Activated CD4-positive, alpha-beta memory T cell treated with anti-CD3 and anti-CD28 coated beads for 36 hours (primary cell): ENCODE measurements at regions of chr12 and their contacts with region 1.

Region 1: GRCh38 chr12:93785262-93786010 is 108.3 kb downstream of the CRADD start:
- DNase-seq: peak; percentile 73
- H3K4me3 Mint-ChIP-seq: peak overlapping the region; percentile 16
- H3K27ac Mint-ChIP-seq: peak overlapping the region; percentile 81
- H3K4me1 Mint-ChIP-seq: peaks cover 57% of the 10 kb centered on the region
- H3K27me3 Mint-ChIP-seq: no peaks in the 10 kb centered on the region

Region 2: GRCh38 chr12:92928962-92929915 is 856.2 kb before region 1 on chr12 and contains the start of gene EEA1:
- CTCF ChIA-PET with region 1: no interaction called
- POLR2A ChIA-PET with region 1: no interaction called
- intact Hi-C with region 1: loop called (anchors 10 kb)
- DNase-seq: peak; percentile 98
- H3K4me3 Mint-ChIP-seq: peak within 1 kb of the TSS; percentile 85
- H3K27ac Mint-ChIP-seq: peak within 1 kb of the TSS; percentile 95
- H3K4me1 Mint-ChIP-seq: peaks cover 32% of the 10 kb centered on the region
- H3K27me3 Mint-ChIP-seq: no peaks in the 10 kb centered on the region
- total RNA-seq, gene EEA1: 17.5 to 17.7 TPM

Region 3: DNA sequence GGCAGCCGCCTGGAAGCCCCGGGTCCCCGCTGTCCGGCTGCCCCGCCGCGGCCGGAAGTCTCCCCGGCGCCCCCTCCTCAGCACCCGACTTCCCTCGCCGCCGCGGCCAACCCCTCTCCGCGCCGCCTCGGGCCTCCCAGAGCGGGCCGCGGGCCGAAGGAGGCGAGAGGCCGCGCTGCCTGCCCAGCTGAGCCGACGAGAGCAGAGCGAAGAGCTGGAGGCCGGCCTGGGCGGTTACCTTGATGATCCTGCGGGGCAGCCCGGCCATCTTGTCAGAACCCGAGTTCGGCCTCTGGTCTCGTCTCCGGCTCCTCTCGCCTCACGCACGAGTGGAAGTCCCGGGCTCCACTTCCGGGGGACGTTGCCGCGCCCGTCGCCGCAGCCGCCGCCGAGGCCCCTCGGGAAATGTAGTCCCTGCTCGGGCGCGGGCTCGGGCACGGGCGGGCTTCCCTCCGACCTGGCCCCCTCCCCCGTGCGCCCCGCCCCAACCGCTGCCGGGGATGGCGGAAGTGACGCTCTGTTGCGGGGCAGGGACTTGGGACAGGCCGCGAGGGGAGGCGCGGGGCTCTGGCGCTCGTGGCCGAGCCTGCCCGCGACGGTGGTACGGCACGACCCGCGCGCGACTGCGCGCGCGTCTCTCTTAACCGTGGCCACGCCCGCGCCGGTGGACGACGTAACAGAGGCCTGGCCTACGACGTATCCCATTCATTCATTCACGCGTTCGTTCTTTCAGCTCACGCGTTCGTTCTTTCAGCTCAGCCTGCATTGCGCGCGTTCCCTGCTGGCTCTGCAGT is 343.6 kb before region 1 on chr12 and contains the start of gene UBE2N:
- CTCF ChIA-PET with region 1: no interaction called
- POLR2A ChIA-PET with region 1: no interaction called
- intact Hi-C with region 1: loop called (anchors 10 kb)
- DNase-seq: peak; percentile 97
- H3K4me3 Mint-ChIP-seq: peak within 1 kb of the TSS; percentile 94
- H3K27ac Mint-ChIP-seq: peak within 1 kb of the TSS; percentile 95
- H3K4me1 Mint-ChIP-seq: peaks cover 46% of the 10 kb centered on the region
- H3K27me3 Mint-ChIP-seq: no peaks in the 10 kb centered on the region
- total RNA-seq, gene UBE2N: 177 TPM

Region 4: DNA sequence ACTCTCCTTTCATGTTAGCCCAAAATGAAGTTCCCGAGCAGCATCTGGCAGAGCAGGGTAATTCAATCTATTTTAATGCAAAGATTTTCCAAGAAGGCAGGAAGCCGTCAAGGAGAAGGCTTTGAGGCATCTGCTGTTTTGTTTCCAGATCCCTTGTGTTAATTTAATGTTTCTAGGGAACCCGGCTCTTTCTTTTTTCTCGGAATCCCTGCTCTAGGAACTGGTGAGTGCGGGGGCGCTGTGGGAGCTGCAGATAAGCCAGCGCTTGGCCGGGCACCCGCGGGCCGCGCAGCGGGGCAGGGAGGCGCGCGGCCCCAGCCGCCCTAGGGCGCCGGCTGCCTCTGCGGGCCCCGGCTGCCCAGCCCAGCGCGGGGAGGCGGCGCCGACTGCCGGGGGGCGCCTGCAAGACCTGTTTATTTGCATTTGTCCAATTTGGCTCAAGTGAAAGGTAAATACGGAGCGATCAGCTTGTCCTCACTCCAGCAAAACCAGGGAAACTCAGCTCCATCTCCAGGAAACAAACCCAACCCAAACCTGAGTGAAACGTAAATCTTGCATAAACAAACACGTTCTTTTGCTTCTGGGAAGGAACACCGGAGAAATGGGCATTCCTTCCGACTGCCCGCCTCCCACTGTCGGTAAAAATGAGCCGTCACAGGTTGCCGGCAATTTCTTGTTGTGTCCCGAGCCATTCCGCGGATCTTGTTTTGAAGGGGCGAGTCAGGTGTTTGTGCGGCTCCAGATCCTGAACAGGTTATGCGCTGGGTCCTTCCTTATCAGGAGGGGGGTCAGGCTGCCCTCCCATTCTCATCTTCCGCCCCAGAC is 43.1 kb before region 1 on chr12:
- CTCF ChIA-PET with region 1: no interaction called
- POLR2A ChIA-PET with region 1: no interaction called
- intact Hi-C with region 1: loop called (anchors 5 kb)
- DNase-seq: peak; percentile 77
- H3K4me3 Mint-ChIP-seq: peak overlapping the region; percentile 74
- H3K27ac Mint-ChIP-seq: peak overlapping the region; percentile 81
- H3K4me1 Mint-ChIP-seq: peaks cover 35% of the 10 kb centered on the region
- H3K27me3 Mint-ChIP-seq: no peaks in the 10 kb centered on the region

Region 5: GRCh38 chr12:93802698-93803423 is 17.4 kb after region 1 on chr12:
- CTCF ChIA-PET with region 1: interaction called, 3 read pairs
- POLR2A ChIA-PET with region 1: interaction called, 3 read pairs
- intact Hi-C with region 1: loop called (anchors 1 kb)
- DNase-seq: no peak
- H3K4me3 Mint-ChIP-seq: no peak overlapping the region
- H3K27ac Mint-ChIP-seq: no peak overlapping the region
- H3K4me1 Mint-ChIP-seq: peaks cover 45% of the 10 kb centered on the region
- H3K27me3 Mint-ChIP-seq: no peaks in the 10 kb centered on the region

Region 6: GRCh38 chr12:94372461-94372860 is 587.0 kb after region 1 on chr12:
- CTCF ChIA-PET with region 1: no interaction called
- POLR2A ChIA-PET with region 1: no interaction called
- intact Hi-C with region 1: loop called (anchors 10 kb)
- DNase-seq: no peak
- H3K4me3 Mint-ChIP-seq: no peak overlapping the region
- H3K27ac Mint-ChIP-seq: peak overlapping the region; percentile 80
- H3K4me1 Mint-ChIP-seq: peaks cover 40% of the 10 kb centered on the region
- H3K27me3 Mint-ChIP-seq: no peaks in the 10 kb centered on the region